ENCODE measurements at regions of chr6 and their contacts with region 1.

Region 1: DNA sequence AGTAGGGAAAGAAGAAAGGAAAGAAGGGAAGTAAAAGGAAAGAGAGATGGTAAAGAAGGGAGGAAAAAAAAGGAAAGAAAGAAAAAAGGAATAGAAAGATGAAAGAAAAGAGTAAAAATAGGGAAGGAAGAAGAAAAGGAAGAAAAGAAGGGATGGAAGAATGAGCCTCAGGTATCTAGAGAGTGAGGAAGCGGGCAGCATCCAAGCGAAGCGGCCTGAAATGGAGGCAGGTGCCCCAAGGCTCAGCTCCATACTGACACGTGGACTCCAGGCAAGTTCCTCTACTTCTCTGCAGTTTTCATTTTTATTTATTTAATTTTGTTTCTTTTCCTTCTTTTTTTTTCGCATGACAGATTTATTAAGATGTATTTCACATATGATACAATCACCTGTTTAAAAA is 373.1 kb downstream of the ESR1 start:
- DNase-seq: no peak
- ATAC-seq: no peak
- H3K4me3 ChIP-seq: no peak overlapping the region
- H3K27ac ChIP-seq: no peak overlapping the region
- H3K4me1 ChIP-seq: peaks cover 0 to 10% (median 0%) of the 10 kb centered on the region in 12 donors
- H3K27me3 ChIP-seq: no peaks in the 10 kb centered on the region
- CTCF ChIP-seq: no peak
- POLR2A ChIP-seq: no peak

Region 2: DNA sequence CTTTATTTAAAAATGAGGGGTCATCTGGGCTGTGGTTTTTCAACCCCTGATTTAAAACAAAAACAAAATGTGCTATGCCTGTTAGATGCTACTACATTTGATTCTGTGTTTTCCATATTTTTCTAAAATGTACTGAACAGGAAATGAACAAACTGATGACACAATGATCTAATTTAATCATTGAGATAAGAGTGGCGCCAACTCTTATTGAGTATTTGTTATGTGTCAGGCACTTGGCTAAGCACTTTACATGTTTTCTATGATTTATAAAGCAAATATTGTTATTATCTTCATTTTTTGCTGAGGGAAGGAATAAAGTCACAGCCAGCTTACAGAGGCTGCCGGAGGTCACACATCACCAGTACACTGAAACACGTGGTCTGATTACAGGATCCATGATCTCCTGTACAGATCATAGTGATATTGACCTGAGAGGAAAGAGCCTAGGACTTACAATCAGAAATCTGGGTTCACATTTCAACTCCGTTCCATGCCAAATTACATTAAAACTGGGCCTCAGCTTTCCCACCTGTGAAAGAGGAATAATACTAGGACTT is 206.5 kb before region 1 on chr6:
- intact Hi-C with region 1: no loop called
- DNase-seq: no peak
- ATAC-seq: no peak
- H3K4me3 ChIP-seq: no peak overlapping the region
- H3K27ac ChIP-seq: no peak overlapping the region
- H3K4me1 ChIP-seq: no peaks in the 10 kb centered on the region
- H3K27me3 ChIP-seq: no peaks in the 10 kb centered on the region
- CTCF ChIP-seq: no peak
- POLR2A ChIP-seq: no peak

Region 3: GRCh38 chr6:152195896-152196295 is 15.3 kb after region 1 on chr6:
- intact Hi-C with region 1: loop called in 1 of 10 experiments (anchors 2 kb)
- DNase-seq: no peak
- ATAC-seq: no peak
- H3K4me3 ChIP-seq: no peak overlapping the region
- H3K27ac ChIP-seq: no peak overlapping the region
- H3K4me1 ChIP-seq: peaks cover 0 to 7% (median 0%) of the 10 kb centered on the region in 12 donors
- H3K27me3 ChIP-seq: no peaks in the 10 kb centered on the region
- CTCF ChIP-seq: no peak
- POLR2A ChIP-seq: no peak

Measured in heart left ventricle (tissue), 16 donors.